ENCODE measurements at regions of chr4 and their contacts with region 1.

Region 1: GRCh38 chr4:1693129-1693896 is 9.2 kb upstream of the FAM53A start:
- DNase-seq: peak; percentile 69 to 81 (median 75)
- H3K4me3 ChIP-seq: no peak overlapping the region
- H3K4me3 Mint-ChIP-seq: no peak overlapping the region
- H3K27ac ChIP-seq: no peak overlapping the region
- H3K27ac Mint-ChIP-seq: peak overlapping the region in 1 of 7 donors; percentile 64
- H3K4me1 ChIP-seq: peaks cover 0 to 4% of the 10 kb centered on the region in 2 donors
- H3K4me1 Mint-ChIP-seq: peaks cover 2% of the 10 kb centered on the region
- H3K27me3 ChIP-seq: no peaks in the 10 kb centered on the region
- H3K27me3 Mint-ChIP-seq: no peaks in the 10 kb centered on the region
- CTCF ChIP-seq: peak; percentile 97

Region 2: DNA sequence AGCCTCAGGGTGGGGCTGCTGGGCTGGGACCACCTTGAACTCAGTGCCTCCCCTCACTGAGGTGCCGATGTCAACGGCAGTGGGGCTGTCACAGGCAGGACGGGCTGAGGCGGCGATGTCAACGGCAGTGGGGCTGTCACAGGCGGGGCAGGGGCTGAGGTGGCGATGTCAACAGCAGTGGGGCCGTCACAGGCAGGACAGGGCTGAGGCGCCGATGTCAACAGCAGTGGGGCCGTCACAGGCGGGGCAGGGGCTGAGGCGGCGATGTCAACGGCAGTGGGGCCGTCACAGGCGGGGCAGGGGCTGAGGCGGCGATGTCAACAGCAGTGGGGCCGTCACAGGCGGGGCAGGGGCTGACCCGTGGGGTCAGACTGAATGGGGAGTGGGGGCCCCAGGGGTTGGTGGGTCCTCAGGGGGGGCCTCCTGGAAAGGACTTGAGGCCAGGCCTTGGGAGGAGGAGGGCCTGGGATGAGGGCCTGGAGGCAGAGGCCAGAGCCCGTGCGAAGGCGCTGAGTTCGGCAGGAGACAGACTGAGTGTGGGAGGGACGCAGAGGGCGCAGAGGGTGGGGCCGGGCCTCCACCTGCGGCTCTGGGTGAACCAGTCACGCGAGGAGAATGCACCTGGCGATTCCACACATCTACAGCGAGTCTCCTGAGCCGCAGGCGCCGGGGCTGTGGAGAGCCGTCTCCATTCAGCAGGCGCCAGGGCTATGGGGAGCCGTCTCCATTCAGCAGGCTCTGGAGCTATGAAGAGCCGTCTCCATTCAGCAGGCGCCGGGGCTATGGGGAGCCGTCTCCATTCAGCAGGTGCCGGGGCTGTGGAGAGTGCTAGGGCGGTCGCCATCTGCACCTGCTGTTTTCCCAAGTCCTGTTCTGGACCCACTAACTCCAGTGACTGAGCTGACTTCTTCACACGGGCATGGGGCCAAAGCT is 1042.1 kb before region 1 on chr4:
- intact Hi-C with region 1: no loop called
- DNase-seq: no peak
- H3K4me3 ChIP-seq: no peak overlapping the region
- H3K4me3 Mint-ChIP-seq: no peak overlapping the region
- H3K27ac ChIP-seq: no peak overlapping the region
- H3K27ac Mint-ChIP-seq: no peak overlapping the region
- H3K4me1 ChIP-seq: no peaks in the 10 kb centered on the region
- H3K4me1 Mint-ChIP-seq: no peaks in the 10 kb centered on the region
- H3K27me3 ChIP-seq: peaks cover 0 to 19% of the 10 kb centered on the region in 2 donors
- H3K27me3 Mint-ChIP-seq: peaks cover 20 to 35% (median 31%) of the 10 kb centered on the region in 3 donors
- CTCF ChIP-seq: no peak

Region 3: GRCh38 chr4:1721004-1721665 is 27.8 kb after region 1 on chr4 and contains the starts of genes TACC3 and TMEM129:
- intact Hi-C with region 1: loop called (anchors 1 to 2 kb)
- DNase-seq: peak; percentile 88 to 91 (median 89)
- H3K4me3 ChIP-seq: peak within 1 kb of the TSS; percentile 51 to 80 (median 56)
- H3K4me3 Mint-ChIP-seq: peak within 1 kb of the TSS; percentile 85 to 98
- H3K27ac ChIP-seq: peak within 1 kb of the TSS; percentile 88 to 96
- H3K27ac Mint-ChIP-seq: peak within 1 kb of the TSS; percentile 97 to 100 (median 98)
- H3K4me1 ChIP-seq: peaks cover 59 to 75% of the 10 kb centered on the region in 2 donors
- H3K4me1 Mint-ChIP-seq: peaks cover 62% of the 10 kb centered on the region
- H3K27me3 ChIP-seq: no peaks in the 10 kb centered on the region
- H3K27me3 Mint-ChIP-seq: peaks cover 0 to 3% (median 0%) of the 10 kb centered on the region in 3 donors
- CTCF ChIP-seq: no peak
- polyA plus RNA-seq, gene TACC3: 43.7 to 84.2 (median 56.6) TPM
- polyA plus RNA-seq, gene TMEM129: 22.4 to 40.2 (median 24.1) TPM

Region 4: GRCh38 chr4:1726146-1726934 is 33.0 kb after region 1 on chr4:
- intact Hi-C with region 1: loop called (anchors 1 to 2 kb)
- DNase-seq: peak; percentile 83 to 85 (median 85)
- H3K4me3 ChIP-seq: peak overlapping the region in 1 of 3 experiments; percentile 80
- H3K4me3 Mint-ChIP-seq: peak overlapping the region; percentile 66 to 89
- H3K27ac ChIP-seq: peak overlapping the region; percentile 68 to 96
- H3K27ac Mint-ChIP-seq: peak overlapping the region; percentile 89 to 98 (median 94)
- H3K4me1 ChIP-seq: peaks cover 81 to 86% of the 10 kb centered on the region in 2 donors
- H3K4me1 Mint-ChIP-seq: peaks cover 81% of the 10 kb centered on the region
- H3K27me3 ChIP-seq: no peaks in the 10 kb centered on the region
- H3K27me3 Mint-ChIP-seq: peaks cover 0 to 3% (median 0%) of the 10 kb centered on the region in 3 donors
- CTCF ChIP-seq: peak; percentile 95